CD8-positive, alpha-beta T cell (primary cell): ENCODE measurements at regions of chr4 and their contacts with region 1.

Region 1: GRCh38 chr4:93879919-93880318 is 51.4 kb downstream of the ATOH1 start:
- DNase-seq: no peak
- ATAC-seq: no peak
- H3K4me3 ChIP-seq: no peak overlapping the region
- H3K4me3 Mint-ChIP-seq: no peak overlapping the region
- H3K27ac ChIP-seq: no peak overlapping the region
- H3K27ac Mint-ChIP-seq: no peak overlapping the region
- H3K4me1 ChIP-seq: no peaks in the 10 kb centered on the region
- H3K4me1 Mint-ChIP-seq: no peaks in the 10 kb centered on the region
- H3K27me3 ChIP-seq: no peaks in the 10 kb centered on the region
- H3K27me3 Mint-ChIP-seq: no peaks in the 10 kb centered on the region
- CTCF ChIP-seq: no peak

Region 2: GRCh38 chr4:93578942-93579341 is 301.0 kb before region 1 on chr4:
- CTCF ChIA-PET with region 1: no interaction called
- POLR2A ChIA-PET with region 1: no interaction called
- intact Hi-C with region 1: no loop called
- DNase-seq: no peak
- ATAC-seq: no peak
- H3K4me3 ChIP-seq: no peak overlapping the region
- H3K4me3 Mint-ChIP-seq: no peak overlapping the region
- H3K27ac ChIP-seq: no peak overlapping the region
- H3K27ac Mint-ChIP-seq: no peak overlapping the region
- H3K4me1 ChIP-seq: no peaks in the 10 kb centered on the region
- H3K4me1 Mint-ChIP-seq: no peaks in the 10 kb centered on the region
- H3K27me3 ChIP-seq: no peaks in the 10 kb centered on the region
- H3K27me3 Mint-ChIP-seq: no peaks in the 10 kb centered on the region
- CTCF ChIP-seq: no peak

Region 3: GRCh38 chr4:94084155-94084554 is 204.2 kb after region 1 on chr4:
- CTCF ChIA-PET with region 1: no interaction called
- POLR2A ChIA-PET with region 1: no interaction called
- intact Hi-C with region 1: no loop called
- DNase-seq: no peak
- ATAC-seq: no peak
- H3K4me3 ChIP-seq: no peak overlapping the region
- H3K4me3 Mint-ChIP-seq: no peak overlapping the region
- H3K27ac ChIP-seq: no peak overlapping the region
- H3K27ac Mint-ChIP-seq: no peak overlapping the region
- H3K4me1 ChIP-seq: no peaks in the 10 kb centered on the region
- H3K4me1 Mint-ChIP-seq: no peaks in the 10 kb centered on the region
- H3K27me3 ChIP-seq: no peaks in the 10 kb centered on the region
- H3K27me3 Mint-ChIP-seq: peaks cover 2% of the 10 kb centered on the region
- CTCF ChIP-seq: no peak

Region 4: DNA sequence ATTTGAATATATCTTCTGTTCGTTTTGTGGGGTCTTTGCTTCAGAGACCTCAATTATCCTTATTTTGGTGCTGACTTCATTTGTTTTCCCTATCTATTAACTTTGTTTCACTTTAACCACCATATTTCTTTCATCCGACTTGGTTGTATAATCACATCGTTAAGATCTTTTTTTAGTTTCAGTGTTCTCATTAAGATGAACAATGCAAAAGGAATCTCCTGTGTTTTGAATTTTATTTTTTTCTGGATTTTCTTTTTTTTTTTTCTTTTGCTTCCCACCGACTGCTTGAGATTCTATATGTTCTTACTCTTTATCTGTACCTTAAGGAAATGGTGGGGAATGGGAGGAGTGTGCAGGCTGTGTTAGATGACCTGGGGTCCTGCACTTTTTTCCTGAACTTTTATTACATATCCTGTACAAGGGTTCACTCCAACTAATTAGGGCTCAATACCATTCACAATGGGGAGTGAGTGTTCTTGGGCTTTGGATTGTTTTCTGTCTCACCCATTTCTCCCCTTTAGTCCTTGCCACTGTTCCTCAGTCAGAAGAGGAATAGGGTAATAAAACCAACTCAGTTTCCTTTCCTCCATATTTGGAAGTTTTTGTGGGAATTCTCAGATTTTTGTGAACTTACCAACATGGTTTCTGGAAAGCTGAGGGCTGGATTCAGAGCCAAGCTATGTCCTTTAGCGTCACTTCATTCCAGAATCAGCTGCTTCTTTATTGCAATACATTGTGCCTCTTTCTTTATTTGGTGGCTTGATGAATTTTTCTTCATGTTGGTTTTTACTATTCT is 834.6 kb after region 1 on chr4:
- CTCF ChIA-PET with region 1: no interaction called
- POLR2A ChIA-PET with region 1: no interaction called
- intact Hi-C with region 1: loop called in 1 of 2 experiments (anchors 5 kb)
- DNase-seq: no peak
- ATAC-seq: no peak
- H3K4me3 ChIP-seq: no peak overlapping the region
- H3K4me3 Mint-ChIP-seq: no peak overlapping the region
- H3K27ac ChIP-seq: no peak overlapping the region
- H3K27ac Mint-ChIP-seq: no peak overlapping the region
- H3K4me1 ChIP-seq: no peaks in the 10 kb centered on the region
- H3K4me1 Mint-ChIP-seq: no peaks in the 10 kb centered on the region
- H3K27me3 ChIP-seq: no peaks in the 10 kb centered on the region
- H3K27me3 Mint-ChIP-seq: no peaks in the 10 kb centered on the region
- CTCF ChIP-seq: no peak